HepG2 (cell line): ENCODE measurements at regions of chr9 and their contacts with region 1.

Region 1: DNA sequence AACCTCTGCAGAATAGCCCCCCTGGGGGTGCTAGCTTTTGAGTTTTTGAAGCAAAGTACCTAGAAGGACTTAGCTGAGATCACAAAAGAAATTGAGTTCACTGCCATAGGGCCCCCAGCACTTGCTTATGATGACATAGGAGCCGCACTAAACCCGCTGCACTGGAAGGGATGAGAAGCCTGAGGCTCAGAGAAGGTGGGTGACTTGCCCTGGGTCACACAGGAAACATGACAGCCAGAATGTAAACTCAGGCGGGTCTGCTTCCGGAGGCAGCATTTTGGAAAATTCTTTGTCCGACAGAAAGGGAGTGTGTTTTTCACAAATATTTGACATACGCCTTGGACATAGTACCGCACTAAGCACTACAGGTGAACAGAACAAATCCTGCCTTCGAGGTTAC is 8.4 kb upstream of the TOR1B start:
- DNase-seq: no peak
- ATAC-seq: no peak
- H3K4me3 ChIP-seq: no peak overlapping the region
- H3K27ac ChIP-seq: no peak overlapping the region
- H3K4me1 ChIP-seq: peaks cover 14% of the 10 kb centered on the region; the same call in 1 of the 2 replicates
- H3K27me3 ChIP-seq: peaks cover 1 to 17% of the 10 kb centered on the region in 2 experiments; a peak in 3 of 5 replicates
- CTCF ChIP-seq: no peak
- EP300 ChIP-seq: no peak
- POLR2A ChIP-seq: no peak
- RAD21 ChIP-seq: no peak

Region 2: DNA sequence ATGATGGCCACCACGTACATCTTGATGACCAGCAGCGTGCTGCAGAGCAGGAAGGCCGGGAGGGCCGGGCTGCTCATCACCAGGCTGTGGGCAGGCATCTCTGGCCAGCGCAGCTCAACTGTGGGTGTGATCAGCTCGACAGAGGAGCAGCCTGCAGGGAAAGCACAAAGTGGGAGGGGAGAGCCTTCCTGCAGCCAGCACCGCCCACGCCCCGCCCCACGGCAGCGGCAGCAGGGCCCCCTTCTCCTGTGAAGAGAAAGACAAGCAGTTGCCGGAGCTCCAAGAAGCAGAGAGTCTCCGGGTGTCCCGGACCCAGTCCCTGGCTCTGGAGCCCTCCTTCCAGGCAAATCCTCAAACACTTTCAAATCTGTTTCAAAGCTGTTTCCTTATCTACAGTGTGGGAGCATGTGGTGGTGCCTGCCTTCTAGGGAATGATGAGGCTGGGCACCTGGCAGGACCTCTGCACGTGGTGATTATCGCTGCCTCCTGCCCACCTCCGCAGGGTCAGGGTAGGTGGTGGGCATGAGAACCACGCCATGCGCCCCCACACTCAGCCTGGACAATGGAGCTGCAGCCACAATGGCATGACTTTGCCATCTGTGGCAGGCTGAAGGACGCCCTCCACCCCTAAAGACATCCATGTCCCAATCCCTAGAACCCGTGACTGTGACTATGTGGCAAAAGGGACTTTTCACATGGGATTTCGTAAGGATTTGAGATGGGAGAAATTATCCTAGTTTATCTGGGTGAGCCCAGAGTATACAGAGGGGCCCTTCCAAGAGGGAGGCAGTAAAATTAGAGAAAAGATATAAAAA is 41.4 kb before region 1 on chr9 and contains the start of gene PTGES:
- CTCF ChIA-PET with region 1: no interaction called
- POLR2A ChIA-PET with region 1: no interaction called
- in situ Hi-C with region 1: no loop called
- intact Hi-C with region 1: loop called (anchors 5 kb)
- DNase-seq: no peak
- ATAC-seq: peak; percentile 83
- H3K4me3 ChIP-seq: peak within 1 kb of the TSS in 1 of 3 experiments; percentile 47; a peak in 1 of 6 replicates
- H3K27ac ChIP-seq: no peak within 1 kb of the TSS
- H3K4me1 ChIP-seq: peaks cover 17% of the 10 kb centered on the region
- H3K27me3 ChIP-seq: peaks cover 7 to 62% of the 10 kb centered on the region in 2 experiments
- CTCF ChIP-seq: no peak
- EP300 ChIP-seq: no peak
- POLR2A ChIP-seq: no peak
- RAD21 ChIP-seq: no peak
- total RNA-seq, gene PTGES: 0.07 TPM in 1 of 2 replicates, not detected in the other